AG04449 (cell line): ENCODE measurements at regions of chr1 and their contacts with region 1.

Region 1: DNA sequence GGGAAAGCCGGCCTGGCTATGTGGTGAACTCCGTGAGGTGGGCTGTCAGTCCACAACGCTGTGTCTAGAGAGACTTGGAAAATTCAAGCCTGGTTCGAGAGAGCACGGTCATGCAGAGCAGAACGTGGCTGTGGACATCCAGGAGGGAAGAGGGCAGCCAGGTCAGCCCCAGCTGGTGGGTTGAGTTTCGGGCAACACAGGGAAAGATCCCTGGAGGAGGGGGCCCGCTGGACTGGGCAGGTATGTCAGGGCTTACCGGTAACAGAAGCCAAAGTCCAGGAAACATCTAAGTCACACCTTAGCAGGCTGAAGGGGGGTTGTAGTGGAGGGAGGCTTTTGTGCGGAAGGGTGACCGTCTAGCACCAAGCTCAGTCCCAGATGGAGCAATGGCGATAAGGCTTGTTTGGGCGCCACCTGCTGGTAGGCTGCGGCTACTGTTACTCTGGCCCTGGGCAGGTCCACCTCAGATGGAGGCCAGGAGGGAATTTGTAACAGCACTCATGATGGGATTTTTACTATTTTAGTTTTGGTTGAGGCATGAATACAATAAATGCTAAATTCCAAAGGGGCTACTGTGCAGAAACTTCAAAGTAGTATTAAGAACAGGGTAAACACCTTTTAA is 143.3 kb upstream of the ZNF644 start:
- DNase-seq: no peak
- H3K4me3 ChIP-seq: no peak overlapping the region
- CTCF ChIP-seq: peak; percentile 95

Region 2: DNA sequence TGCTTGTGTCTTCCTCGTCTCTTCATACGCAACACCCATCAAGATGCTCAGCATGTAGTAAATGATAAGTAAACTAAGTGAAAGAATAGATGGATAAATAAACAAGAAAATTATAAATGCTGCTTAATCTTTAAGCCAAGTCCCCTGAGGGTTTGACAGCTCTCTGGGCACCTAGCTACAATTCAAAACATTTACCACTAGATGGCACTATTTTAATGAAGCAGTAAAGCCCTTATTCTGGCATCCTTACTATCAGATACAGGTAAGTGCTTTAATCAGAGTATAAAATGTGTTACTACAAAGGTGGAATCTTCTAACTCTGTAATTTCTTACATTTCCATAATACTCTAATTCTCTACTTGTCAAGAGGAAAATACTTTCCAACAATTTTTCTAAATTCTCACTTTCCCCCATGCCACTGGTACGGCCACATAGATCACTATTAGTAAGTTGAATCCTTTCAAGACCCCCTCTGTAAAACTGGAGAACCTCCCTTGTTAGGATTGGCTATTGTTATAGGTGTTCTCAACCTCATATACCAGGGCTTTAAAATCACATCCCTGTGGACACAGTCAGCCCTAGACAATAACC is 585.8 kb before region 1 on chr1:
- CTCF ChIA-PET with region 1: interaction called, 40 read pairs
- POLR2A ChIA-PET with region 1: no interaction called
- DNase-seq: peak; percentile 2
- H3K4me3 ChIP-seq: no peak overlapping the region
- CTCF ChIP-seq: peak; percentile 30

Region 3: DNA sequence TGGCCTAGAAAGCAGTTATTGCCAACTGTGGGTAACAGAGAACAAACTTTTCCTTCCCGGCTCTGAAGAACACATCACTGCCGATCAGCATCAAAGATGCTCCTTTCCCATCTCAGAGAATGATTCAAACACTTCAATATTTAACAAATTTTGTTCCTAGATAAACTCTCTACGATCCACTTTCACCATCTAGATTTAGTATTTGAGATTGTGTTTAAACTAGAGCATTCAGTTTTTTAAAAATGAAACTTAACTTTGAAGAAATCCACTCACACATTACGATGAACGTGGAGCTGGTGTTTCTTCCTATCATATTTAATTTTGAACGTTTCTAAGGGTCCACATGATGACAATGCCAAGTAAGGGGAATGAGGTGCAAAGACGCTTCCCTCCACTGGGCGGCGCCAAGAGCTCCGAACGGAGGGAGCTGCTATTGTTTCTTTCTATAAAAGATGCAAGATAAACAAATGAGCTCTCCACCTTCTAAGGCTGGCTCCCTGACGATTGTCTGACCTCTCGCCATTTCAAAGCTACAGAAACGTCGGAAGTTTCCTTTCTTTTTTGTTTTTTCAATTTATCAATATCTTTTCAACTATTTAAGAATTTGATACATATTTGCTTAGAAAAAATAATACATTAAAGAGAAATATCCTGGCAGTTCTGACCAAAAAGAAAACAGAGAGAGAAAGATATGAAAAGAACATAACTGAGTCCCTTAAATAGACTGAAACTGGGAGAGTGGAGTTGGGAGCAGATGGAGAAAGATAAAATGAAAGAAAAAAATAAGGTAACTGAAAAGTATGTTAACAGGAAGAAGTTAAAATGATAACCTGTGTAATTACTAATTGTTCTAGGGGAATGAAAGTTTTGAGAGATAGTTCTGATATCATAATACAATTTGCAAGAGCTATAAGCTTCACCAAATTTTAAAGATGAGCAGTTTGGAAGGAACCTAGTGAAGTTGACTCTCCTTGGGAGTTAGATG is 443.6 kb before region 1 on chr1:
- CTCF ChIA-PET with region 1: interaction called, 27 read pairs
- POLR2A ChIA-PET with region 1: no interaction called
- DNase-seq: no peak
- H3K4me3 ChIP-seq: no peak overlapping the region
- CTCF ChIP-seq: peak; percentile 80

Region 4: GRCh38 chr1:91148641-91149069 is 16.5 kb before region 1 on chr1:
- CTCF ChIA-PET with region 1: interaction called, 14 read pairs
- POLR2A ChIA-PET with region 1: no interaction called
- DNase-seq: no peak
- H3K4me3 ChIP-seq: no peak overlapping the region
- CTCF ChIP-seq: no peak

Region 5: GRCh38 chr1:91201176-91201575 is 36.0 kb after region 1 on chr1:
- CTCF ChIA-PET with region 1: interaction called, 31 read pairs
- POLR2A ChIA-PET with region 1: no interaction called
- DNase-seq: no peak
- H3K4me3 ChIP-seq: no peak overlapping the region
- CTCF ChIP-seq: no peak

Region 6: DNA sequence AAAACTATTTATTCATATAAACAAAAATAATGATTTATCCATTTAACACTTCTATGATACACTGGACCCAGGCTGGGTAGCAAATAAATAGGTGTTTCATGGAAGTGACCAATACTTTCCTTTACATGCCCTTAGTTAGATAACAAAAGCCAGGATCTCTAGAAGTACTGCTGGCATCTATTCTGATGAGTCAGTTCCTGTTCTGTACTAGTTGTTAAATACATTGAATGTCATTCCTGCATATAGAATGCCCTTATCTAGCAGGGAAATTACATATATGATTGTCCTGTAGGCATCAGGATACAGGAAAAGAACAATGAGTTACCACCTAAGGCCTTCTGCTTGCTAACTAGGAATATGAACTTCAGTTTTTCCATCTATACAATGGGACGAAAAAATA is 108.7 kb after region 1 on chr1:
- CTCF ChIA-PET with region 1: interaction called, 107 read pairs
- POLR2A ChIA-PET with region 1: no interaction called
- DNase-seq: no peak
- H3K4me3 ChIP-seq: no peak overlapping the region
- CTCF ChIP-seq: no peak

Region 7: GRCh38 chr1:91282695-91283420 is 117.7 kb after region 1 on chr1:
- CTCF ChIA-PET with region 1: interaction called, 107 read pairs
- POLR2A ChIA-PET with region 1: no interaction called
- DNase-seq: peak; percentile 21
- H3K4me3 ChIP-seq: no peak overlapping the region
- CTCF ChIP-seq: peak; percentile 72